ENCODE measurements at regions of chr3 and their contacts with region 1.

Region 1: GRCh38 chr3:196073188-196073838 is 8.6 kb downstream of the TFRC start:
- ATAC-seq: peak; percentile 77 to 100 (median 97)
- H3K4me3 ChIP-seq: no peak overlapping the region
- H3K27ac ChIP-seq: no peak overlapping the region
- H3K4me1 ChIP-seq: no peaks in the 10 kb centered on the region

Region 2: GRCh38 chr3:196179380-196180308 is 106.3 kb after region 1 on chr3:
- in situ Hi-C with region 1: loop called in 2 of 9 experiments (anchors 10 to 25 kb)
- ATAC-seq: peak; percentile 26 to 88 (median 81)
- H3K4me3 ChIP-seq: no peak overlapping the region
- H3K27ac ChIP-seq: peak overlapping the region; percentile 56 to 76
- H3K4me1 ChIP-seq: peaks cover 31 to 32% of the 10 kb centered on the region in 2 donors

Region 3: DNA sequence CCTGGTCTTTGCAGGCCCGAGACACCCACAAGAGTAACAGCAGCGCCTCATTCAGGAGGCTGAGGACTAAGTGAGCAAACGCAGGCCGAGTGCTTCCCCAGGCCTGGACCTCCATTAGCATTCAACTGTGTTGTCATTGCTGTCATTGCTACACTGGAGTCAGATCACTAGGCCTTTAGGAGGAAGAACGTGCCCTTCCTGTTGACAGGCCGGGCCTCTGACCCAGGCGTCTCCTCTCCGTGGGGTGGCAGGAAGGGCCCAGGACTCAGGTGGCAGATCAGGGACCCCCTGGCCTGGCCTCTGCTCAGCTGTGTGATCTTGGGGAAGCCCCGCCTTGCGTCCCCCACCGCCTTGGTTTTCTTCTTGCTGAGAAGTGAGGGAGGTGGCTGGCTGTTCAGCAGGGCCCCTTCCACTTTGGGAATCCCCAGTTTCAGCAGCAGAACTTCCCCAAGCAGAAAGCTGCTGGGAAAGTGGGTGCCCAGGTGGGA is 118.8 kb after region 1 on chr3:
- in situ Hi-C with region 1: loop called in 6 of 9 experiments (anchors 10 to 25 kb)
- ATAC-seq: no peak
- H3K4me3 ChIP-seq: no peak overlapping the region
- H3K27ac ChIP-seq: peak overlapping the region; percentile 7 to 25
- H3K4me1 ChIP-seq: peaks cover 31 to 35% of the 10 kb centered on the region in 2 donors

Measured in motor neuron (in vitro differentiated cells).